Sigmoid colon (tissue), 7 donors: ENCODE measurements at regions of chr11 and their contacts with region 1.

Region 1: GRCh38 chr11:9314291-9315036 is at the start of gene TMEM41B:
- DNase-seq: peak; percentile 98
- H3K4me3 ChIP-seq: peak within 1 kb of the TSS; percentile 72 to 100 (median 91)
- H3K27ac ChIP-seq: peak within 1 kb of the TSS; percentile 82 to 86 (median 84)
- H3K4me1 ChIP-seq: peaks cover 0 to 27% (median 16%) of the 10 kb centered on the region in 4 donors
- H3K27me3 ChIP-seq: no peaks in the 10 kb centered on the region
- CTCF ChIP-seq: no peak
- EP300 ChIP-seq: no peak
- POLR2A ChIP-seq: peak; percentile 65 to 69
- total RNA-seq, gene TMEM41B: 20.3 to 22.2 (median 20.5) TPM

Region 2: GRCh38 chr11:9384535-9385303 is 70.3 kb after region 1 on chr11 and contains the start of gene IPO7:
- intact Hi-C with region 1: loop called (anchors 1 kb)
- DNase-seq: peak; percentile 95
- H3K4me3 ChIP-seq: peak within 1 kb of the TSS; percentile 87 to 94 (median 88)
- H3K27ac ChIP-seq: peak within 1 kb of the TSS; percentile 95 to 96 (median 96)
- H3K4me1 ChIP-seq: peaks cover 0 to 60% (median 43%) of the 10 kb centered on the region in 4 donors
- H3K27me3 ChIP-seq: no peaks in the 10 kb centered on the region
- CTCF ChIP-seq: peak in 1 of 4 experiments; percentile 8
- EP300 ChIP-seq: no peak
- POLR2A ChIP-seq: peak; percentile 81 to 84
- total RNA-seq, gene IPO7: 121 to 180 (median 145) TPM

Region 3: DNA sequence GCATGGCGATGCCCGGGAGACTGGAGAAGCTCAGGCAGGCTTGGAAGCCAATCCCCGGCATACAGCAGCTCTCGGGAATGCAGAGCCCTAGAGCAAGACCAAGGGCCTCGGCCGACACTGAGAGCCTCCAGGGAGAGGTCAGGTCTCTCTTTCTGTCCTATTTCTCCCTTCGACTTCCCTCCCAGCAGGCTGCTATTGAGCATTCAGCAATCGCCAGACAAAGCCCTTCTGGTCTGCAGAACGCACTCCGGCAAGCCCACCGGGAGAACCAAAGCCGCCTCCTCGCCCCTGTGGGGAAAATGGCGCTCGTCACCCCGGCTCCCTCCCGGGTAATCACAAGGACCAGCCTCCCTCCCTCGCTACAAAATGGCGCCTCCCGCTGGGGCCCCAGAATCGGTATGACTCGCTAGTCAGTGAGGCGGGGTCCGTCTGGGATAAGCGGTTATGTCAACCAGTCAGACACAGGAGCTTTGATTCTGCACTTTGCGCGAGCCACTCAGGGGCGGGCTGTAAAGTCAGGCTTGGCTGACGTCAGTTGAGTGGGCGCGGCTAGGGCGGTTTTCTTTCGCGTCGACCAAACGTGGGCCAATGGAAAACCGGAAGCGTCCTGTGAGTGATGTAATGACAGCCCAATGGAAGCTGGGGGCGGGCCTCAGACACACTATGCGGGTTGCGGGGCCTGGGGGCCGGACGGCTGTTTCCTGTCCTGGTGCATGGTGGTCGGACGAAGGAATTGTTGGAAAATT is 146.0 kb after region 1 on chr11 and contains the start of gene ZNF143:
- intact Hi-C with region 1: loop called (anchors 1 kb)
- DNase-seq: peak; percentile 100
- H3K4me3 ChIP-seq: peak within 1 kb of the TSS; percentile 68 to 95 (median 82)
- H3K27ac ChIP-seq: peak within 1 kb of the TSS; percentile 95 to 100 (median 100)
- H3K4me1 ChIP-seq: peaks cover 0 to 27% (median 20%) of the 10 kb centered on the region in 4 donors
- H3K27me3 ChIP-seq: no peaks in the 10 kb centered on the region
- CTCF ChIP-seq: peak in 2 of 4 experiments; percentile 4 to 28
- EP300 ChIP-seq: peak in 1 of 4 donors; percentile 8
- POLR2A ChIP-seq: peak; percentile 99
- total RNA-seq, gene ZNF143: 20.2 to 48.4 (median 32.4) TPM